Naive thymus-derived CD4-positive, alpha-beta T cell (primary cell): ENCODE measurements at regions of chr1 and their contacts with region 1.

Region 1: GRCh38 chr1:36369061-36369861 is 16.5 kb downstream of the STK40 start:
- DNase-seq: peak; percentile 70 to 87 (median 80)
- ATAC-seq: peak; percentile 75
- H3K4me3 ChIP-seq: no peak overlapping the region
- H3K4me3 Mint-ChIP-seq: peak overlapping the region in 7 of 10 donors; percentile 2 to 57 (median 32)
- H3K27ac ChIP-seq: peak overlapping the region; percentile 37
- H3K27ac Mint-ChIP-seq: peak overlapping the region; percentile 56 to 97 (median 94)
- H3K4me1 ChIP-seq: peaks cover 27 to 59% of the 10 kb centered on the region in 2 donors
- H3K4me1 Mint-ChIP-seq: peaks cover 50 to 79% (median 69%) of the 10 kb centered on the region in 7 donors
- H3K27me3 ChIP-seq: no peaks in the 10 kb centered on the region
- H3K27me3 Mint-ChIP-seq: no peaks in the 10 kb centered on the region

Region 2: DNA sequence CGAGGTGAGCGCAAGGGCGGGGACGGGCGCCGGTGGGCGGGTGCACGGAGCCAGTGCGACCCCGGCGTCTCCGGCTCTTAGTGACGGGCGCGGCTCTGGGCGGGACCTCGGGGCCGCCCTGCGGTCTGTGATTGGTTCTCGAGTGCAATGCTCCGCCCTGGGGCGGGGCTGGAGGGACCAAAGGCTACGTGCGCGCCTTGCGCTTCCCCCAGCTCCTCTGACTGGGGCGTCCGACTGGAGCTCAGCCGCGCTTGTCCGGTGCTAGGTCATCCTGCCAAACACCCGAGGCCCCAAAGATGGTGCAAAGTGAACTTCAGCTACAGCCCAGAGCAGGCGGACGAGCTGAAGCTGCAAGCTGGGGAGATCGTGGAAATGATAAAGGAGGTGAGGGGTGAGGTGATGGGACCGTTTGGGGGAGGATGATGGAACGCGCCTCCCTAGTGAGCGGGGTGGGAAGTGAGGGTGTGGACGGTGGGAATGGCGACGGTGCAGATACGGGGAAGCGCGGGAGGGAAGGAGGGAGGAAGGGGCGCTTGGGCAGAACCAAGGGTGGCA is 62.3 kb before region 1 on chr1:
- CTCF ChIA-PET with region 1: interaction called, 3 read pairs
- POLR2A ChIA-PET with region 1: interaction called, 17 read pairs
- intact Hi-C with region 1: loop called (anchors 1 to 2 kb)
- DNase-seq: peak; percentile 90 to 96 (median 93)
- ATAC-seq: peak; percentile 99
- H3K4me3 ChIP-seq: peak overlapping the region; percentile 87
- H3K4me3 Mint-ChIP-seq: peak overlapping the region; percentile 87 to 98 (median 96)
- H3K27ac ChIP-seq: peak overlapping the region; percentile 81
- H3K27ac Mint-ChIP-seq: peak overlapping the region; percentile 70 to 97 (median 87)
- H3K4me1 ChIP-seq: peaks cover 0 to 6% of the 10 kb centered on the region in 2 donors
- H3K4me1 Mint-ChIP-seq: peaks cover 6 to 39% (median 13%) of the 10 kb centered on the region in 7 donors
- H3K27me3 ChIP-seq: no peaks in the 10 kb centered on the region
- H3K27me3 Mint-ChIP-seq: no peaks in the 10 kb centered on the region

Region 3: DNA sequence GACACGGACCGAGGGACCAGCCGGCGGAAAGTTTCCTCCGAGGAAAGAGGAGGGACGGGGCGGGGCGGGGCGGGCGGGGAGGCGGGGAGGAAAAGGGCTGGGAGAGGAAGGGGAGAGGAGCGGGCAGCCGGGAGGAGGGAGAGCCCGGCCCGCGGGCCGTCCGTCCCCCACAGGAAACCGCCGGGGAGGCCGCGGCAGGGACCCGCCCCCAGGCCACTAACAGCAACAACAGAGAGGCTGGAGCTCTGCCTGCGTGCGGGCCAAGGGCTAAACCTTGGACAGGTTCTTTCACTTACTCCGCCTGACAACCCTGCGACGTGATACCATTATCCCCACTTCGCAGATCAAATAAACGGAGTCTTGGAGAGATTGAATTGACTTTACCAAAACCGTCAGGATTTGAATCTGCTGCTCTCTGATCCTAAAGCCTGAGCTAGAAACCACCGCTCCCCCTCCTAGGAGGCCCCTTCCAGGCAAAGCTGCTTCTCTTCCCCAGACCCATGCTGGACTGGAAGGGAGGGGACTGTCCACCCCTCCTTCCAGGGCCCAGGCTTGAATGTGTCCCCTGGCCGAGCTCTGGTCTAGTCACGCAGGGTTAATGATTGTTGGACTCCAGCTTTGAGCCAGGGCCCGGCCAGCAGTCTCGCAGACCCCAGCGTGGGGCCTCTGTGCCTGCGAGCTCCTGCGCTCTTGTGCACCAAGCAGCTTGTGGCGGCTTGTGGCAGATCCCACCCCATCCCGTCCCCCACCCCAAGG is 45.5 kb before region 1 on chr1 and contains the start of gene EVA1B:
- CTCF ChIA-PET with region 1: no interaction called
- POLR2A ChIA-PET with region 1: interaction called, 6 read pairs
- intact Hi-C with region 1: loop called in 1 of 2 experiments (anchors 2 kb)
- DNase-seq: peak in 4 of 9 donors; percentile 19 to 72 (median 22)
- ATAC-seq: peak; percentile 37
- H3K4me3 ChIP-seq: peak within 1 kb of the TSS; percentile 74
- H3K4me3 Mint-ChIP-seq: peak within 1 kb of the TSS; percentile 70 to 87 (median 80)
- H3K27ac ChIP-seq: peak within 1 kb of the TSS; percentile 46
- H3K27ac Mint-ChIP-seq: peak within 1 kb of the TSS in 7 of 9 donors; percentile 14 to 77 (median 59)
- H3K4me1 ChIP-seq: peaks cover 10 to 11% of the 10 kb centered on the region in 2 donors
- H3K4me1 Mint-ChIP-seq: peaks cover 14 to 35% (median 23%) of the 10 kb centered on the region in 7 donors
- H3K27me3 ChIP-seq: no peaks in the 10 kb centered on the region
- H3K27me3 Mint-ChIP-seq: peaks cover 0 to 5% (median 0%) of the 10 kb centered on the region in 5 donors
- total RNA-seq, gene EVA1B: 1.5 to 12.5 (median 2.2) TPM

Region 4: GRCh38 chr1:36342481-36343478 is 26.5 kb before region 1 on chr1:
- CTCF ChIA-PET with region 1: interaction called, 176 read pairs
- POLR2A ChIA-PET with region 1: interaction called, 155 read pairs
- intact Hi-C with region 1: loop called (anchors 1 kb)
- DNase-seq: peak; percentile 47 to 72 (median 58)
- ATAC-seq: peak; percentile 86
- H3K4me3 ChIP-seq: no peak overlapping the region
- H3K4me3 Mint-ChIP-seq: no peak overlapping the region
- H3K27ac ChIP-seq: no peak overlapping the region
- H3K27ac Mint-ChIP-seq: peak overlapping the region in 6 of 9 donors; percentile 32 to 86 (median 71)
- H3K4me1 ChIP-seq: peaks cover 0 to 8% of the 10 kb centered on the region in 2 donors
- H3K4me1 Mint-ChIP-seq: peaks cover 6 to 40% (median 28%) of the 10 kb centered on the region in 7 donors
- H3K27me3 ChIP-seq: no peaks in the 10 kb centered on the region
- H3K27me3 Mint-ChIP-seq: no peaks in the 10 kb centered on the region

Region 5: GRCh38 chr1:36350659-36351226 is 18.5 kb before region 1 on chr1:
- CTCF ChIA-PET with region 1: interaction called, 176 read pairs
- POLR2A ChIA-PET with region 1: interaction called, 155 read pairs
- intact Hi-C with region 1: loop called (anchors 1 to 2 kb)
- DNase-seq: peak in 8 of 9 donors; percentile 43 to 75 (median 52)
- ATAC-seq: peak; percentile 96
- H3K4me3 ChIP-seq: no peak overlapping the region
- H3K4me3 Mint-ChIP-seq: peak overlapping the region; percentile 17 to 74 (median 50)
- H3K27ac ChIP-seq: peak overlapping the region; percentile 50
- H3K27ac Mint-ChIP-seq: peak overlapping the region; percentile 75 to 94 (median 87)
- H3K4me1 ChIP-seq: peaks cover 4 to 22% of the 10 kb centered on the region in 2 donors
- H3K4me1 Mint-ChIP-seq: peaks cover 6 to 38% (median 33%) of the 10 kb centered on the region in 7 donors
- H3K27me3 ChIP-seq: no peaks in the 10 kb centered on the region
- H3K27me3 Mint-ChIP-seq: no peaks in the 10 kb centered on the region